BJ (cell line): ENCODE measurements at regions of chr16 and their contacts with region 1.

Region 1: GRCh38 chr16:67816240-67817031 is 9.7 kb downstream of the TSNAXIP1 start:
- DNase-seq: no peak
- H3K4me3 ChIP-seq: no peak overlapping the region
- H3K27me3 ChIP-seq: no peaks in the 10 kb centered on the region
- CTCF ChIP-seq: peak; percentile 100

Region 2: GRCh38 chr16:67667817-67668494 is 148.5 kb before region 1 on chr16:
- CTCF ChIA-PET with region 1: interaction called, 30 read pairs
- POLR2A ChIA-PET with region 1: no interaction called
- DNase-seq: peak; percentile 59
- H3K4me3 ChIP-seq: no peak overlapping the region
- H3K27me3 ChIP-seq: no peaks in the 10 kb centered on the region
- CTCF ChIP-seq: peak; percentile 96

Region 3: GRCh38 chr16:67767953-67768352 is 48.5 kb before region 1 on chr16:
- CTCF ChIA-PET with region 1: interaction called, 3 read pairs
- POLR2A ChIA-PET with region 1: interaction called, 11 read pairs
- DNase-seq: peak; percentile 26
- H3K4me3 ChIP-seq: no peak overlapping the region
- H3K27me3 ChIP-seq: no peaks in the 10 kb centered on the region
- CTCF ChIP-seq: no peak

Region 4: GRCh38 chr16:67833418-67834241 is 17.2 kb after region 1 on chr16:
- CTCF ChIA-PET with region 1: interaction called, 18 read pairs
- POLR2A ChIA-PET with region 1: no interaction called
- DNase-seq: no peak
- H3K4me3 ChIP-seq: peak overlapping the region; percentile 85
- H3K27me3 ChIP-seq: no peaks in the 10 kb centered on the region
- CTCF ChIP-seq: no peak

Region 5: DNA sequence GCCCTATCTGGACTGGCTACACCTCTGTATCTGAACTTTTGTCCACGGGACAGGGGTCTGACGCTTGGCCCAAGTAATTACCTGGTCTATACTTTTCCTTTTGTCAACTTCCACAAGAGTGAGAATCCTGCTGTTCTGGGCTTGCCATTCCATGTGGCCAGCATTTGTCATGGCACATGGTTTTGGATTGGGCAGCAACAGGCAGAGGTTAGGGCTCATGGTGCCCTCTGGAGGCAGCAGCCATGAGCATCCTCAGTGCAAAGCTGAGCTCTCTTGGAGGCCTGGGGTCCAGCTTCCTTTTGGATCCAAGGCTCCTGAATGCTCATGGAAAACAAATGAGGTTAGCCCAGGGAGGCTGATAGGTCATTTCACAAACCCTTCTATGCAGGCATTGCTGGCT is 48.9 kb after region 1 on chr16:
- CTCF ChIA-PET with region 1: interaction called, 23 read pairs
- POLR2A ChIA-PET with region 1: no interaction called
- DNase-seq: no peak
- H3K4me3 ChIP-seq: no peak overlapping the region
- H3K27me3 ChIP-seq: no peaks in the 10 kb centered on the region
- CTCF ChIP-seq: peak; percentile 46

Region 6: DNA sequence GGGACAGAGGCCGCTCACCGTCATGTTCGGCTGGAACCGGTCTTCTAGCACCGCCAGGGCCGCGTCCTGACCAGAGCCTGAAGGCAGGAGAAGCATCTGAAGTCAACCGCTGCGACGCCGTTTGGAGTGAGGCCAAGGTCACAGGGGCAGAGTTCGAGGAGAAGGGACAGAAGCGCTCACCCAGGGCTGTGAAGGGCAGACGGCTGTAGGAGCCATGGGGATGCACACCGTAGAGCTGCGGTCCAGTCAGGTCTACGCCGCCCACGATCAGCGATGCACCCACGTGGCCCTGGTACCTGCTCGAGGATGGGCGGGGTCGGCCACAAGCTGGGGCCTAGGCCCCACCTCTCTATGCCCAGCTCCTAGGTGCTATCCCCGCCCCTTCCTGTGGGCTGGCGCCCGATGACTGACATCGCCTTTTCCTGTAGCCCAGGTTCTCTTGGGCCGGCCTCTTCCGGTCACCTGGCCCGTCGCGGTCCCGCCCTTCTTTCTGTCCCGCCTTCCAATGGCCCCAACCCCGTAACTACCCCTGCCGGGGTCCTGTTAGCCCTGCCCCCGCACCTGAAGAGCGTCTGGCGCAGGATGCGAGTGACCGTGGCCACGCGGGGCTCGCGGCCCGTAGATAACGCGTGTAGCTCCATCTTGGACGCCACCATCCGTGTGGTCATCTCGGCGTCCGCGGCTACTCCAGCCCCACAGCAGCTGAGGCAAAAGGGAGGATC is 119.1 kb after region 1 on chr16:
- CTCF ChIA-PET with region 1: interaction called, 23 read pairs
- POLR2A ChIA-PET with region 1: no interaction called
- DNase-seq: peak; percentile 59
- H3K4me3 ChIP-seq: peak overlapping the region; percentile 84
- H3K27me3 ChIP-seq: no peaks in the 10 kb centered on the region
- CTCF ChIP-seq: no peak